ENCODE measurements at regions of chr6 and their contacts with region 1.

Region 1: DNA sequence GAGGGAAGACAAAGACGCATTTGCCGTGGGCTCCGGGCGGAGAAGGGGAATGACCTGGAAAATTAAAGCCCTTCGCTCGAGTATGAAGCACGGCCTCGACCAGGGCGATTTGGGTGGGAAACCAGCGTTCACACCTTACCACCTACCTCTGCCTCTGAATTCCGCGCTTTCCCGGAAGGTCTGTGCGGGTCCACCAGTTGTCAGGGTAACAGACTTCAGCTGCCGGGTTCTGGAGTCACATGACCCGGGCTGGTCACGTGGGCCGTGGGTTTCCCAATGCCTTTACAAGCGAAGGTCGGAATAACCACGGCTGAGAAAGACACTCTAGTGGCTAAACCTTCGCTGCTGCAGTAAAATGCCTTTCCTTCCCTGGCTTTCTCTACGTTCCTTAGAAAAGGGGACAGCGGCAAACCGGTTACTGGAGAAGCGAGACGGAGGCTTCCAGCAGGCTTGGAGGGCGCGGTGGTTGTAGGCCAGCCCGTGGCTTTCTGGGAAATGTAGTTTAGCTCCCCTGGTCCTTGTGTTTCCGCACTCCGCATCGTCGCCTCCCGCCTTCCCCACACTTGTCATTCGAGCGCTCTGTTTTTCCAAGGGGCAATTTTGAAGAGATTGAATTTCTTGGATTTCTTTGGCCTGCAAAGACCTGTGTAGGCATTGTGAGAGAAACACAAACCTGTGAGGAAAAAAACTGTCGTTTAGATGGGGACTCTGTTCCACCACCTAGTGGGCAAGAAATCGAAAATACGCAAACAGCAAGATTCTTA is at the start of gene CEP162:
- DNase-seq: peak; percentile 93 to 98 (median 97)
- H3K4me3 ChIP-seq: peak within 1 kb of the TSS; percentile 90 to 100 (median 94)
- H3K27ac ChIP-seq: peak within 1 kb of the TSS; percentile 85 to 95
- H3K4me1 ChIP-seq: peaks cover 0 to 2% (median 0%) of the 10 kb centered on the region in 3 donors
- H3K27me3 ChIP-seq: no peaks in the 10 kb centered on the region
- CTCF ChIP-seq: peak; percentile 49
- total RNA-seq, gene CEP162: 14.6 TPM

Region 2: GRCh38 chr6:83615025-83615999 is 612.3 kb before region 1 on chr6:
- intact Hi-C with region 1: loop called (anchors 10 kb)
- DNase-seq: peak in 3 of 5 donors; percentile 14 to 36 (median 21)
- H3K4me3 ChIP-seq: no peak overlapping the region
- H3K27ac ChIP-seq: no peak overlapping the region
- H3K4me1 ChIP-seq: no peaks in the 10 kb centered on the region
- H3K27me3 ChIP-seq: no peaks in the 10 kb centered on the region
- CTCF ChIP-seq: peak; percentile 37

Region 3: DNA sequence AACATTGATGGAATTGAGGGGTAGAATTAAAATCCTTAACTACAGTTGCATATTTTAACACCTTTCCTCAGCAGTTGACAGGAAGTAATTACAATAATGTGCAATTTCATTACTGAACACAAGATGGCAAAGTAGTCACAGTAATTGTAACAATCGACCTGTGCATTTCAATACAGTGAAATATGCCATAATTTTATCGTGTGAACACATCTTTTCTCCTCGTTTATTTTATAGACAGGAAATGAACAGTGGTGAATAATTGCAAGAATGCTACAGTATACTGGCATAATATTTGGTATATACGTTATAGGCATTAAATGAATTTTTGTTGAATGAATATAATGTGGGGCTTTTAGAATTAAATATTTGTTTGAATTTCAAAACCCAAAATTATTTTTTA is 343.1 kb before region 1 on chr6:
- intact Hi-C with region 1: loop called (anchors 10 kb)
- DNase-seq: peak in 2 of 5 donors; percentile 56 to 64
- H3K4me3 ChIP-seq: no peak overlapping the region
- H3K27ac ChIP-seq: no peak overlapping the region
- H3K4me1 ChIP-seq: no peaks in the 10 kb centered on the region
- H3K27me3 ChIP-seq: no peaks in the 10 kb centered on the region
- CTCF ChIP-seq: peak; percentile 56

Measured in kidney (tissue), 22 donors.